ENCODE measurements at regions of chr10 and their contacts with region 1.

Region 1: GRCh38 chr10:113626809-113627370 is 37.0 kb downstream of the NRAP start:
- DNase-seq: no peak
- ATAC-seq: no peak
- H3K4me3 ChIP-seq: no peak overlapping the region
- H3K27ac ChIP-seq: no peak overlapping the region
- H3K4me1 ChIP-seq: no peaks in the 10 kb centered on the region
- H3K27me3 ChIP-seq: peaks cover 59% of the 10 kb centered on the region
- CTCF ChIP-seq: no peak
- POLR2A ChIP-seq: no peak
- RAD21 ChIP-seq: no peak

Region 2: DNA sequence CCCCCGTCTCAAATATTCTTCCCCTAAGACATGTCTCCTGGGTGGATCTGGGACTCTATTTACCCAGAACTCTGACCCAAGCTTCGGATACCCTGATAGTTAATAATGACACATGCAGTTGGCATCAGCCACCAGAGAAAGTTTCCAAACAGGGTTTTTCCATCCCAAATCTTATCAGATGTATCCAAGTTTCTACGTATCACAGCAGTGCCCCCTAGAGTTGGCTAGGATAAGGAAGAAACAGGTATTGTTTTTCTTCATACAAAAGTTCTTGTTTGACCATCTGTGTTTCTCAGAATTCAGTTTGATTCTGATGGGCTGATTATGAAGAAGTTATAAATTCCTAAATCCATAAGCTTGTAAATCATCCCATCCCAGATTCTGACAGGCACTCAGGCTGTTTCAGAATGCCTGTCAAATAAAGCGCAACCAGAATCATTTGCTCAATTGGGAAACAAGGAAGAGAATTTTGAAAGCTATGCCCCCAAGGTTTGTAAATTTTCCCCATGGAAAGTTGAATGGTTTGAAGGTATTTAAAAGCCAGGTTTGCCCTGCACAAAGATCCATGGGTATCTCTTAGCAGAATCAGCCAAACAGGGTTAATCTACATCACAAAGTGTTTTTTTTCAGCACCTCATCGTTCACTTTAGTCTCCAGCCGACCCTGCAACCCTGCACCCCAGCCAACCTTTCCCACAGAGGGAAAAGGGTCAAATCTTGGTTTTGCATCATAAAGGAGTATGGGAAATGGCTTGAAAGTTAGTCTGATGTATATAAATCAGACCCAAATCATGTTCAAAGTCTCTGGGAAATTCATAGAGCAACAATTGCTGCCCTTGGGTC is 10.4 kb before region 1 on chr10:
- CTCF ChIA-PET with region 1: interaction called, 12 read pairs
- POLR2A ChIA-PET with region 1: no interaction called
- RAD21 ChIA-PET with region 1: no interaction called
- intact Hi-C with region 1: no loop called
- DNase-seq: peak; percentile 16
- ATAC-seq: peak; percentile 71
- H3K4me3 ChIP-seq: no peak overlapping the region
- H3K27ac ChIP-seq: no peak overlapping the region
- H3K4me1 ChIP-seq: no peaks in the 10 kb centered on the region
- H3K27me3 ChIP-seq: peaks cover 37% of the 10 kb centered on the region
- CTCF ChIP-seq: peak; percentile 53 to 95 (median 88); a peak in 5 of 6 replicates
- POLR2A ChIP-seq: no peak
- RAD21 ChIP-seq: peak; percentile 67